T-cell (primary cell): ENCODE measurements at regions of chr1 and their contacts with region 1.

Region 1: DNA sequence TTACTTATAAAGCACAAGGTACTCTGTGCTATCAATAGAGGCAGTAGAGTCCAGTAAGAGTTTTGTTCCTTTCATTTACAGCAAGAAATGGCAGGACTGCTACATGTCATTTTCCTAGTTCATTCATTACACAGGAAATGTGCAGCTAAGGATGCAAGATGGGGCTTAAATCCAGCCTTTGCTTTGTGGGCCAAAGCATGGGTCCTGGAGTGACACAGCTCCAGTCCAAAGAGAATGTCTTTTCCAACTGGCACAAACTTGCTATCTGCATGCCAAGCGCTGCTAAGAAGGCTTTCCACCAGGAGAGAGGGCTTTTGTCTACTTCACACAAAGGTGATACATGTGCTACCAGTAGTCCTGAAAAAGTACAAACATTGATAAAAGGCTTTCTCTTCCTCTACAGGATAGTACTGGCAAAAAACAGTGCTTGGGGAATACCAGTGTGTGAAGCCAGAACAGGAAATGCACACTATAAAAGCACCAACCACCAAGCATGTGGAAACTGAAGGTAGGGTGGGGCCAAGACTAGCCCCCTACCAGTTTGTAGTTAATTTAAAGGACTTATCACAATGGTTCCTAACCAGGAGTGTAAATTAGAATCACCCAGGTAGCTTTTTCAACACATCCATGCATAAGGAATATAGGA is 68.7 kb downstream of the ARID4B start:
- DNase-seq: peak in 1 of 35 experiments; percentile 30
- ATAC-seq: peak; percentile 50 to 76 (median 66)
- H3K4me3 ChIP-seq: no peak overlapping the region
- H3K4me3 Mint-ChIP-seq: peak overlapping the region in 1 of 3 donors; percentile 60
- H3K27ac ChIP-seq: peak overlapping the region; percentile 8
- H3K27ac Mint-ChIP-seq: peak overlapping the region; percentile 82 to 83
- H3K4me1 ChIP-seq: peaks cover 18 to 21% of the 10 kb centered on the region in 2 experiments
- H3K4me1 Mint-ChIP-seq: peaks cover 61 to 76% (median 74%) of the 10 kb centered on the region in 3 donors
- H3K27me3 ChIP-seq: no peaks in the 10 kb centered on the region
- H3K27me3 Mint-ChIP-seq: no peaks in the 10 kb centered on the region

Region 2: DNA sequence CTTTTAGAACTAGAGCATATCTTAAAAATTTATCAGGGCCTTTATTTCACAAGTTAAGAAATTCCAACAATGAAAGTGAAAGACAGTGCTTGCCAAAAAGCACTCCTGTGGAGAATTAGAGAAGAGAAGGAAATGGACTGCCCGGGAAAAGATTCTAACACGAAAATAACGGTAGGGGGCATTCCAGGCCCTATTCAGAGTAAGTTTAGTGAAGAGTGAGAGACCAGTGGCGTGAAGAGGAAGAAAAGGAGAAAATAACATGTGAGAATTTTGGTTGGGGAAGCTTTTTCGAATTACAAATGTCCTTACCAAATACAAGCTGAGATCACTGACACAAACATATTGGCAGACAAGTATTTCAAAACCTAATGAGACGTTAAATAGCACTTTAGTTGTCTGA is 59.8 kb before region 1 on chr1:
- CTCF ChIA-PET with region 1: no interaction called
- POLR2A ChIA-PET with region 1: interaction called in 1 of 2 experiments, 14 read pairs
- DNase-seq: no peak
- ATAC-seq: no peak
- H3K4me3 ChIP-seq: no peak overlapping the region
- H3K4me3 Mint-ChIP-seq: no peak overlapping the region
- H3K27ac ChIP-seq: no peak overlapping the region
- H3K27ac Mint-ChIP-seq: peak overlapping the region in 1 of 2 donors; percentile 43
- H3K4me1 ChIP-seq: no peaks in the 10 kb centered on the region
- H3K4me1 Mint-ChIP-seq: peaks cover 0 to 8% (median 4%) of the 10 kb centered on the region in 3 donors
- H3K27me3 ChIP-seq: no peaks in the 10 kb centered on the region
- H3K27me3 Mint-ChIP-seq: no peaks in the 10 kb centered on the region

Region 3: DNA sequence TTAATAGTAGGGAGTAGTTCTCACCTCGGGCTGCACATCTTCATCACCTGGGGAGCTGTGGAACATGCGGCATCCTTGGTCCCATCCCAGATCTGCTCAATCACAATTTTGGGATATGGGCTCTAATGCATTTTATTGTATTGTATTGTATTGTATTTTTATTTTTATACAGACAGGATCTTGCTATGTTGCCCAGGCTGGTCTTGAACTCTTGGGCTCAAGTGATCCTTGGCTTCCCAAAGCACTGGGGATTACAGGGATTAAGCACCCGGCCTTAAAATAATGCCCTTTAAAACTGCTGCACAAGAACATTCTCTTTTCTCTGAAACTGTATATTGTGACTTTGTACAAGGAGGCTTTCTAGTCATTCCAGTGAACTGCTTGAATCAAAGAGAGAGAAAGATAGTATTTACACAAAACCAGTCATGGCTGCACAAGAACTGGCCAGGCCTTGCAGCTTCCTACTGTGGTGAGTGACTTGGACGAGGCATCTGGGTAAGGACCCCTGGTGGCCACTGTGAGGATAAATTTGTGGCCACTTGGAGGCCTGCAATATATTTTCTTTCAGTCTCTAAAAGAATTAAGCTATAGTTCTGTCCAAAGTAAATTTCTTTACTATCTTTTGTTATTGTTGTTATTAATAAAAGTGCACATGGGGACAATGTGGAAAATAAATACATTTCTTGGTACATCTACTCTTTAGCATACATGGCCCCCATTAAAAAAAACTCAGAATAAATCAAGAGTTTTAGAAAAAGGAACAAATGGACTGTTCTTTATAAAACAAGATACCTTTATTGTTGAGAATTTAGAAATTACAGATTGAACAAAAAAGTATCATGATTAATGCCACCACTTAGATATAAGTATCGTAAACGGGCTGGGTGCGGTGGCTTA is 156.0 kb after region 1 on chr1:
- CTCF ChIA-PET with region 1: interaction called, 8 to 13 read pairs
- POLR2A ChIA-PET with region 1: no interaction called
- DNase-seq: peak; percentile 9 to 74 (median 45)
- ATAC-seq: peak; percentile 70 to 78 (median 76)
- H3K4me3 ChIP-seq: no peak overlapping the region
- H3K4me3 Mint-ChIP-seq: no peak overlapping the region
- H3K27ac ChIP-seq: no peak overlapping the region
- H3K27ac Mint-ChIP-seq: no peak overlapping the region
- H3K4me1 ChIP-seq: no peaks in the 10 kb centered on the region
- H3K4me1 Mint-ChIP-seq: peaks cover 3 to 13% (median 9%) of the 10 kb centered on the region in 3 donors
- H3K27me3 ChIP-seq: no peaks in the 10 kb centered on the region
- H3K27me3 Mint-ChIP-seq: no peaks in the 10 kb centered on the region

Region 4: GRCh38 chr1:235597867-235598553 is 338.8 kb after region 1 on chr1:
- CTCF ChIA-PET with region 1: no interaction called
- POLR2A ChIA-PET with region 1: no interaction called
- DNase-seq: no peak
- ATAC-seq: no peak
- H3K4me3 ChIP-seq: no peak overlapping the region
- H3K4me3 Mint-ChIP-seq: no peak overlapping the region
- H3K27ac ChIP-seq: no peak overlapping the region
- H3K27ac Mint-ChIP-seq: no peak overlapping the region
- H3K4me1 ChIP-seq: peaks cover 0 to 5% of the 10 kb centered on the region in 2 experiments
- H3K4me1 Mint-ChIP-seq: peaks cover 5 to 7% (median 6%) of the 10 kb centered on the region in 3 donors
- H3K27me3 ChIP-seq: peaks cover 0 to 26% of the 10 kb centered on the region in 2 experiments
- H3K27me3 Mint-ChIP-seq: no peaks in the 10 kb centered on the region

Region 5: GRCh38 chr1:236370420-236370819 is 1111.2 kb after region 1 on chr1:
- CTCF ChIA-PET with region 1: no interaction called
- POLR2A ChIA-PET with region 1: no interaction called
- DNase-seq: no peak
- ATAC-seq: no peak
- H3K4me3 ChIP-seq: no peak overlapping the region
- H3K4me3 Mint-ChIP-seq: no peak overlapping the region
- H3K27ac ChIP-seq: no peak overlapping the region
- H3K27ac Mint-ChIP-seq: no peak overlapping the region
- H3K4me1 ChIP-seq: no peaks in the 10 kb centered on the region
- H3K4me1 Mint-ChIP-seq: peaks cover 0 to 6% (median 0%) of the 10 kb centered on the region in 3 donors
- H3K27me3 ChIP-seq: no peaks in the 10 kb centered on the region
- H3K27me3 Mint-ChIP-seq: peaks cover 2 to 4% of the 10 kb centered on the region in 2 donors